CD8-positive, alpha-beta T cell (primary cell): ENCODE measurements at regions of chr9 and their contacts with region 1.

Region 1: DNA sequence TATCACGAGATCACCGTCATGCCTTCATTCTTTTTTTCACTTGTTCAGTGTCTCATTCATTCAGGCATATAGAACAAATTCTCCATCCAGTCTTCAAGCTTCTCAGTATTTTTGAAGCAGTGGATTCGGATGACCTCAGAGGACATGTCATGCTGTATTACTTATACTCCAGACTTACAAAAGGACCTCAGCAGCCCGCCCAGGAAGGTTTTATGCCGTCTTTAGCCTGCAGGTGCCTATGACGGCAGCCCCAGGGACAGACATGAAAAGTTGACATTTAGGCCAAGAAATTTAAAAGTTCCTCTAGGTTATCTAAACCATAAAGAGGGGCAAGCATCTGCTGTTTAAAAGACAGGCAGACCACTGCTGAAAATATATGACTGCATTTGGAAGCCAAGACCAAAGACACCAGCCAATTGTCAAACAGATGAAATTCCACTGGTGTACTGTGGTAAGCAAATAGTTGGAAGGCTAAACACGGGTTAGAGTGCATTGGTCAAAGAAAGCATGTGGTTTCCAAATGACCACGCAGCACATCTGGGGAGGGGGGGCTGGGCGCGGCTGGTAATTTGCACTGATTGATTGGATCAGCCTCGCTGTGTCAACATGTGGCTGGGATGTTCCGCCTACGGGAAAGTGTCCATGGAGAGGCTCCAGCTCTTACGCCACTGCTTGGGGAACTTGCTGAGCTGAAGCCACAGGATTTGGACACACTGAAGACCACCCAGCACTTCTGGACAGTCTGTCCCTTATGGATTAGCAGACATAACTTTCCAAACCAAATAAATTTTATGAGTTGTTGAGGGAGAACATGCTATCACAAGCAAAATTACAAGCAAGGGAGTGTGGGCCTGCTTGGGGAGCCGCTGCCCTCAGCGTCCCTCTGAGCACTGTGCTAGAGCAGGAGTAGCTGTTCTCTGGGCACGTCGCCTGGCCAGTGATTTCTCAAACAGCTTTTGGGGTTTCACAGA is 173.6 kb downstream of the FANCC start:
- DNase-seq: no peak
- ATAC-seq: no peak
- H3K4me3 ChIP-seq: no peak overlapping the region
- H3K4me3 Mint-ChIP-seq: no peak overlapping the region
- H3K27ac ChIP-seq: no peak overlapping the region
- H3K27ac Mint-ChIP-seq: no peak overlapping the region
- H3K4me1 ChIP-seq: no peaks in the 10 kb centered on the region
- H3K4me1 Mint-ChIP-seq: no peaks in the 10 kb centered on the region
- H3K27me3 ChIP-seq: no peaks in the 10 kb centered on the region
- H3K27me3 Mint-ChIP-seq: no peaks in the 10 kb centered on the region
- CTCF ChIP-seq: no peak

Region 2: GRCh38 chr9:95167998-95168397 is 24.1 kb after region 1 on chr9:
- CTCF ChIA-PET with region 1: no interaction called
- POLR2A ChIA-PET with region 1: no interaction called
- intact Hi-C with region 1: loop called in 1 of 2 experiments (anchors 1 kb)
- DNase-seq: peak; percentile 12 to 70 (median 46)
- ATAC-seq: peak; percentile 48
- H3K4me3 ChIP-seq: no peak overlapping the region
- H3K4me3 Mint-ChIP-seq: no peak overlapping the region
- H3K27ac ChIP-seq: no peak overlapping the region
- H3K27ac Mint-ChIP-seq: no peak overlapping the region
- H3K4me1 ChIP-seq: no peaks in the 10 kb centered on the region
- H3K4me1 Mint-ChIP-seq: no peaks in the 10 kb centered on the region
- H3K27me3 ChIP-seq: no peaks in the 10 kb centered on the region
- H3K27me3 Mint-ChIP-seq: no peaks in the 10 kb centered on the region
- CTCF ChIP-seq: peak; percentile 64